A673 (cell line): ENCODE measurements at regions of chr14 and their contacts with region 1.

Region 1: DNA sequence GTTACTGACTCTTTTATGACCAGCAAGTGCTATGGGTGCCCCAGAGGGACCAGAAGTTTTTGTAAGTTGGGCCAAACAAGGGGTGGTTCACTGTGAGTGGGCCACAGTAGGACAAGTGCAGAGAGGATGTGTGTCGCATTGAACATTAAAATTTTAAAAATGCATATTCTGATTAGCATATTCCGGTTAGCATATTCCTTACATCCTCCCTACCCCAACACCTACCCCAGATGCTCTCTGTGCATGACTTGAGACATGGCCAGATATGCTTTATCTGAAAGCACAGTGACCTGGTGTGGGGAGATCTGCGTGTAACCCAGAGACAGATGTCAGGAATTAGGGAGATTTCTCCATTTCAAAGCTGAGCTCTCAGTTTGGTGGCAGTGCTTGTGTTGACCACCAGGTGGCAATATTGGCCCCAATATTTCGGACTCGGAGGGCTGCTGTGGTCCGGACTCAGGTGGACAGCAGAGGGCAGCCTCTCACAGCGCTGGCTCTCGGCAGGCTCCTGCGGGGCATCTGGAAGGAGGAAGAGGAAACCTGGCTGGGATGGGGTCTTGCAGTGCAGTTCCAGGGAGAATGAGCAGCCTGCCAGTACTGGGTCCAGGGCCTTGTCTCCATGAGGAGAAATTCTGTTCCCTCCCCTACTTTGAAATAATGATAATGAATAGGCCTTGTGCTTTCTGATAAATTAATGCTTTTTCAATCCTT is 1.6 kb upstream of the CEBPE start:
- DNase-seq: peak; percentile 92
- H3K4me3 ChIP-seq: no peak overlapping the region
- H3K27ac ChIP-seq: no peak overlapping the region
- H3K4me1 ChIP-seq: peaks cover 29% of the 10 kb centered on the region
- H3K27me3 ChIP-seq: no peaks in the 10 kb centered on the region
- CTCF ChIP-seq: peak; percentile 100

Region 2: DNA sequence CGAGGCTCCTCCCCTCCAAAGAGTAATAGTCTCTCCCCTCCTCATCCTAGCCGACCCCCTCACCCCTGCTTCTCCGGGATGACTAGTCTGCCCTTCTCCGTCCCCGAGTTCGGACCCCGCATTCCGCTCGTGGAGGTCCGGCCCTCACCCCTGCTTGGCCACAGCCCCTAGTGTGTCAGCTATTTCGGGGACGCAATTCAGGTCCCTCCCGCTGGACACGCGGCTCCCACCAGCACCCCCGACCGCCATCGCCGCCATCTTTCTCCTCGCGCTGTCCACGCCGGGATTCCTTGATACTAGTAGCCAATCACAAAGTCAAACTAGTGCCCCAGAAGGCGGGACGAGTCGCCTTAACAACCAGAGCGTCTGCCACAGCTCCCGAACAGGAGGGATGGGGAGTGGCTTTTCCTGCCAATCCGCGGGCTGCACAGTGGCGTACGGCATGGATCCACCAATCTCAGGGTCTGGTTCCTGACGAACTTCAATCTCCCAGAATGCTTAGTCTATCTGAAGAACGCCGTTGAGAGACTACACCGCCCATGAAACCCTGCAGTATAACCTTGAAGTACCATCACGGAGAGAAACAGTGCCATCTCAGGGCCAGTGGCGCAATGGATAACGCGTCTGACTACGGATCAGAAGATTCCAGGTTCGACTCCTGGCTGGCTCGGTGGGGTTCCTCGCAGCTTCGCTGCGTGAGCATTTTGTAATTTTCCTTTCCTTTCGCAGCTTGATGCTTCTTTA is 191.4 kb before region 1 on chr14 and contains the start of gene PRMT5:
- CTCF ChIA-PET with region 1: no interaction called
- POLR2A ChIA-PET with region 1: no interaction called
- intact Hi-C with region 1: no loop called
- DNase-seq: peak; percentile 100
- H3K4me3 ChIP-seq: peak within 1 kb of the TSS; percentile 88
- H3K27ac ChIP-seq: peak within 1 kb of the TSS; percentile 87
- H3K4me1 ChIP-seq: peaks cover 16% of the 10 kb centered on the region
- H3K27me3 ChIP-seq: no peaks in the 10 kb centered on the region
- CTCF ChIP-seq: no peak
- total RNA-seq, gene PRMT5: 244 and 273 TPM in 2 replicates

Region 3: GRCh38 chr14:23068476-23069412 is 52.0 kb before region 1 on chr14:
- CTCF ChIA-PET with region 1: interaction called, 12 read pairs
- POLR2A ChIA-PET with region 1: no interaction called
- intact Hi-C with region 1: no loop called
- DNase-seq: peak; percentile 95
- H3K4me3 ChIP-seq: peak overlapping the region; percentile 5
- H3K27ac ChIP-seq: peak overlapping the region; percentile 57
- H3K4me1 ChIP-seq: peaks cover 38% of the 10 kb centered on the region
- H3K27me3 ChIP-seq: no peaks in the 10 kb centered on the region
- CTCF ChIP-seq: peak; percentile 100

Region 4: GRCh38 chr14:23141671-23142451 is 21.2 kb after region 1 on chr14:
- CTCF ChIA-PET with region 1: interaction called, 10 read pairs
- POLR2A ChIA-PET with region 1: no interaction called
- intact Hi-C with region 1: no loop called
- DNase-seq: peak; percentile 87
- H3K4me3 ChIP-seq: no peak overlapping the region
- H3K27ac ChIP-seq: peak overlapping the region; percentile 79
- H3K4me1 ChIP-seq: peaks cover 40% of the 10 kb centered on the region
- H3K27me3 ChIP-seq: no peaks in the 10 kb centered on the region
- CTCF ChIP-seq: no peak

Region 5: GRCh38 chr14:23174276-23175184 is 53.8 kb after region 1 on chr14:
- CTCF ChIA-PET with region 1: interaction called, 12 read pairs
- POLR2A ChIA-PET with region 1: no interaction called
- intact Hi-C with region 1: no loop called
- DNase-seq: no peak
- H3K4me3 ChIP-seq: no peak overlapping the region
- H3K27ac ChIP-seq: no peak overlapping the region
- H3K4me1 ChIP-seq: peaks cover 37% of the 10 kb centered on the region
- H3K27me3 ChIP-seq: no peaks in the 10 kb centered on the region
- CTCF ChIP-seq: no peak

Region 6: DNA sequence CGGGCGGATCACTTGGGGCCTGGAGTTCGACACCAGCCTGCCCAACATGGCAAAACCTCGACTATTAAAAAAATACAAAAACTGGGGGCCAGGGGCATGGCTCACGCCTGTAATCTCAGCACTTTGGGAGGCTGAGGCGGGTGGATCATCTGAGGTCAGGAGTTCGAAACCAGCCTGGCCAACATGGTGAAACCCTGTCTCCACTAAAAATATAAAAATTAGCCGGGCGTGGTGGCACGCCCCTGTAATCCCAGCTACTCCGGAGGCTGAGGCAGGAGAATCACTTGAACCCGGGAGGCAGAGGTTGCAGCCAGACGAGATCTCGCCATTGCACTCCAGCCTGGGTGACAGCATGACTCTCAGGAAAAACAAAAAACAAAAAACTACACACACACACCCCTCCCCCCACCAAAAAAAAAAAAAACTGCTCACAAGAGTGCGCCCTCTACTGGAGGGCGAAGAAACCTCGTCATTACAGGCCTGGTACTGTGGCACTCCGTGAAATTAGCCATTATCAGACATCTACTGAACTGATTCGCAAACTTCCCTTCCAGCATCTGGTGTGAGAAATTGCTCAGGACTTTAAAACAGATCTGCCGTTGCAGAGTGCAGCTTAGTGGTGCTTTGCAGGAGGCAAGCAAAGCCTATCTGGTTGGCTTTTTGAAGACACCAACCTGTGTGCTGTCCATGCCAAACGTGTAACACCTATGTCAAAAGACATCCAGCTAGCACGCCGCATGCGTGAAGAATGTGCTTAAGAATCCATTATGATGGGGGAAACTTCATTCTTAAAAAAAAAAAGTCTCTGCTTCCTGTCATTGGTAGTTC is 174.3 kb after region 1 on chr14:
- CTCF ChIA-PET with region 1: no interaction called
- POLR2A ChIA-PET with region 1: no interaction called
- intact Hi-C with region 1: loop called (anchors 10 kb)
- DNase-seq: peak; percentile 81
- H3K4me3 ChIP-seq: no peak overlapping the region
- H3K27ac ChIP-seq: no peak overlapping the region
- H3K4me1 ChIP-seq: peaks cover 14% of the 10 kb centered on the region
- H3K27me3 ChIP-seq: no peaks in the 10 kb centered on the region
- CTCF ChIP-seq: peak; percentile 93